ENCODE measurements at regions of chr3 and their contacts with region 1.

Region 1: DNA sequence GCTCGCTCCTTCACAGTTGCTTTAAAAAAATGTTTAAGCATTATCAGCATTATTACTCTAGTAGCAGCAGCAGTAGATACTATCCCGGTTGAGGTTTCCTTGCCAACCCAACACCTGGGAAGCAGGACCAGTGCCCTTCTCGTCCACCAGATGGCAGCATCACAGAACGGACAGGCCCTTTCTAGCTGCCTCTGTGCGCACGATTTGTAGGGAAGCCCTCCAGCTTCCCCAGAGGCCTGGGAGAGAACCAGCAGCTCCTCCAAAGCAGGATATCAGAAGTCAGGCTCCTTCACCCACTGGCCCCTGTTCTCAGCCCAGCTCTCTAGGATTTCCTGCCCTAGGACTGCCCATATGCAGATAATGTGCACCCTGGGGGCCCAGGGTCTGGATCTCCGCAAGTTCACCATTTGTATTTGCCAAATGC is 16.8 kb upstream of the ESYT3 start:
- DNase-seq: peak; percentile 55 to 96 (median 82)

Region 2: DNA sequence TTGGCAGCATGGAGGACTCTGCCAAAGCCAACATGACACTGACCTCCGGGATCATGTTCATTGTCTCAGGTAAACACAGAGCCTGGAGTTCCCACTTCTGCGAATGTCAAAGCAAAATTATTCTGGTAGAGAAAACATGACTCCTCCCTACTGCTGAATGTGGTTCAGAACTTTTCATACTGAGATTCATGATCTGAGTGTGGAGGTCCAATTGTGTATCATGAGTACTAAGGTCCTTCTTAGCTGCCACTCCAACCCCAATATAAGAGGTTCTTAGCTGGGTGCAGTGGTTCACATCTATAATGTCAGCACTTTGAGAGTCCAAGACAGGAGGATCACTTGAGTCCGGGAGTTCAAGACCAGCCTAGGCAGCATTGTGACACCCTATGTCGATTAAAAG is 393.8 kb before region 1 on chr3:
- intact Hi-C with region 1: no loop called
- DNase-seq: no peak

Region 3: DNA sequence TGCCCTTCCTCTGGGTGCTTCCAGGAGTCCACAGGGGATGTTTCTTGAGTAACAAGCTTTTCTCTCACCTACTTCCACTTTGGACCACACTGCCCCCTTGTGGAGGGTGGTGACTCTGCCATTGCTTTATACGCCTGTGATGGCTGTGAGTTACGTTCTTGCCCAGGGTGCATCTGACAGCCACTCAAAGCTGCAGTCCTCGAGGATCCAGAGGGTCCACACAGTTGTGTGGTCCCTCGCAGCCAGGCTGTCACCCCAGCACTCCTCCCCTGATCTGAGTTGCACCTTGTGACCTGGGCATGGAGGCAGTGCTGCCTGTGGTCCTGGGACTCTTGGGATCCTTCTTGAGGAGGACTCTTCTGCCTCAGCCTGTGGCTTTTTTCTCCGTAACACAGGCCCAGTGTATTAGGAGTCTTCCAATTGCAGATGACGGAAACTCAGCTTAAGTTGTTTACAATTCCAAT is 506.0 kb after region 1 on chr3:
- intact Hi-C with region 1: loop called (anchors 5 kb)
- DNase-seq: peak in 9 of 10 donors; percentile 43 to 95 (median 78)

Measured in posterior cingulate gyrus (tissue), 11 donors.